ENCODE measurements at regions of chr9 and their contacts with region 1.

Region 1: DNA sequence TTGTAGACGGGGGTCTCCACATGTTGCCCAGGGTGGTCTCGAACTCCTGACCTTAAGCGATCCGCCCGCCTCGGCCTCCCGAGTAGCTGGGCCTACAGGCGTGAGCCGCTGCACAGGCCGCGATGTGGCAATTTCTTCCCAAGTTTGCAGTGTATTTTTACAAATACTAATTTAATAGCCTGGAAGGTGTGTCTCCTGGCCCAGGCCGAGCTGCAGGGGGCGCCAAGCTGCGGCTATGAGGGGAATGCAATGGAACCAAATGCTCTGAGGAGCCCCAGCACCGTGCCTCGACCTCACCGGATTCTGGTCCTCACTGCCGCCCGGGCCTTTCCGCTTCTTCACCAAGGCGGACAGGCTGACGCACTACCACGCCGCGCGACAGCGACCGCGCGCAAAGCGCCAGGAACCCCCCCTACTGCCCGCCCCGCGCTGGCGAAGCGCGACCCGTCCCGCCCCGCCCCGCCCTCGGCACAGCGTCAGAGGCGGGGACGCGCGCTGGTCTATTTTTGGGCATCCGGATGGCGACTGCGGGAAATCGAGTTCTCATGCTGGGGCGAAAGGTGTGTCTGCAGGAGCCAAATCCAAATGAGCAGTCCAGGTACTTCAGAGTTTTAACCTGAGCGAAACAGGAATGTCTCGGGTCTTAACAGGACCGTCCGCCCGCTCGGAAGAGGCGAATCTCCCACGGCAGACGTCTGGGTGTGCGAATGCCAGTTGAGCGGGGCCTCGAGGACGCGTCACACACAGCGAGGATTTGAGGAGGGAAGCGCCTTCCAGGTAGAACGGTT is 31.6 kb upstream of the PRXL2C start:
- DNase-seq: peak; percentile 44 to 77
- ATAC-seq: peak; percentile 92
- H3K4me3 ChIP-seq: peak overlapping the region; percentile 68 to 83 (median 74)
- H3K27ac ChIP-seq: peak overlapping the region; percentile 75 to 82 (median 77)
- H3K4me1 ChIP-seq: no peaks in the 10 kb centered on the region
- H3K27me3 ChIP-seq: no peaks in the 10 kb centered on the region
- CTCF ChIP-seq: peak; percentile 30 to 65 (median 40)
- POLR2A ChIP-seq: peak; percentile 12 to 25

Region 2: GRCh38 chr9:96413302-96414221 is 273.2 kb before region 1 on chr9:
- in situ Hi-C with region 1: no loop called
- intact Hi-C with region 1: no loop called
- DNase-seq: no peak
- ATAC-seq: no peak
- H3K4me3 ChIP-seq: no peak overlapping the region
- H3K27ac ChIP-seq: no peak overlapping the region
- H3K4me1 ChIP-seq: peaks cover 6 to 8% of the 10 kb centered on the region in 2 donors
- H3K27me3 ChIP-seq: no peaks in the 10 kb centered on the region
- CTCF ChIP-seq: no peak
- POLR2A ChIP-seq: no peak

Region 3: GRCh38 chr9:96777426-96777864 is 90.7 kb after region 1 on chr9:
- in situ Hi-C with region 1: no loop called
- intact Hi-C with region 1: loop called (anchors 5 kb)
- DNase-seq: no peak
- ATAC-seq: peak in 1 of 2 donors; percentile 16
- H3K4me3 ChIP-seq: peak overlapping the region; percentile 81 to 94 (median 82)
- H3K27ac ChIP-seq: peak overlapping the region; percentile 80 to 90 (median 86)
- H3K4me1 ChIP-seq: peaks cover 7 to 18% of the 10 kb centered on the region in 2 donors
- H3K27me3 ChIP-seq: no peaks in the 10 kb centered on the region
- CTCF ChIP-seq: no peak
- POLR2A ChIP-seq: no peak